ENCODE measurements at regions of chr2 and their contacts with region 1.

Region 1: GRCh38 chr2:70994756-70995729 is at the start of gene TEX261:
- DNase-seq: peak; percentile 98
- H3K4me3 Mint-ChIP-seq: peak within 1 kb of the TSS; percentile 99
- H3K27ac Mint-ChIP-seq: peak within 1 kb of the TSS; percentile 96
- H3K4me1 Mint-ChIP-seq: peaks cover 34% of the 10 kb centered on the region
- H3K27me3 Mint-ChIP-seq: no peaks in the 10 kb centered on the region
- total RNA-seq, gene TEX261: 81.7 and 88.8 TPM in 2 replicates

Region 2: GRCh38 chr2:70887550-70888246 is 107.3 kb before region 1 on chr2:
- intact Hi-C with region 1: no loop called
- DNase-seq: peak; percentile 77
- H3K4me3 Mint-ChIP-seq: peak overlapping the region; percentile 83
- H3K27ac Mint-ChIP-seq: peak overlapping the region; percentile 34
- H3K4me1 Mint-ChIP-seq: peaks cover 23% of the 10 kb centered on the region
- H3K27me3 Mint-ChIP-seq: peaks cover 90% of the 10 kb centered on the region

Region 3: GRCh38 chr2:70964596-70965386 is 30.3 kb before region 1 on chr2:
- intact Hi-C with region 1: loop called (anchors 1 kb)
- DNase-seq: peak; percentile 95
- H3K4me3 Mint-ChIP-seq: peak overlapping the region; percentile 90
- H3K27ac Mint-ChIP-seq: no peak overlapping the region
- H3K4me1 Mint-ChIP-seq: peaks cover 7% of the 10 kb centered on the region
- H3K27me3 Mint-ChIP-seq: peaks cover 37% of the 10 kb centered on the region

Region 4: GRCh38 chr2:70977605-70978205 is 17.3 kb before region 1 on chr2:
- intact Hi-C with region 1: loop called (anchors 1 kb)
- DNase-seq: peak; percentile 73
- H3K4me3 Mint-ChIP-seq: peak overlapping the region; percentile 79
- H3K27ac Mint-ChIP-seq: peak overlapping the region; percentile 54
- H3K4me1 Mint-ChIP-seq: peaks cover 12% of the 10 kb centered on the region
- H3K27me3 Mint-ChIP-seq: peaks cover 21% of the 10 kb centered on the region

Region 5: DNA sequence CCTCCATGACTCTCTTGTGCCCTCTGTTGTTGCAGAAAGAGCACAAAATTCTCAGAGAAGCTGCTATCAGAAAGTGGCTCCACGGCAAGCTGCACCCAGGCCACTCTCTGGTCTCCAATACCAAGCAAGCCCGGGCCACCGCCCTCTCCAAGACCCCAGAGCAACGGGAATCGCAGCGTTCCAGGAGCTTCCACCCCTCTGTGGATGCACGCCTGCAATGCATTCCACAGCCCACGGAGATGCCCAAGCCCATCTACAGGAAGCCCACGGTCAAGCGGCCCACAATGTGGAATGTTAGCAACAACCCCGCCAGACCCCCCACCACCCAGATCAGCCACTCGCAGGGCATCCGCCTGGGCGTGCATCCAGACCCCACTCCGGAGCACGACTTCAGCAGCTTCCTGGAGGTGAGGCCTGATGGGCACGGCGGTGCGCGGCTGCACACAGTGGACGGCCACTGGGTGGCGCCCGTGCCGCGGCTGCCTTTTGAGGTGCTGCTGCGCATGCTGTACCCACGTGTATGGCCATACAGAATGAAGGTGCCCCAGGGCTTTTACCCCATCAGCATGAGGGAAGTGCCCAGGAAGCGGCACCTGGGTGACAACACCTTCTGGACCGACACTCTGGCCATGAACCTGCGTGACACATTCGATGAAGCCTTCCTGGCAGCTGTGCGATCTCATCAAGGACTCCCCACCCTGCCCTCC is 10.3 kb before region 1 on chr2:
- intact Hi-C with region 1: loop called (anchors 1 kb)
- DNase-seq: peak; percentile 95
- H3K4me3 Mint-ChIP-seq: peak overlapping the region; percentile 45
- H3K27ac Mint-ChIP-seq: no peak overlapping the region
- H3K4me1 Mint-ChIP-seq: peaks cover 12% of the 10 kb centered on the region
- H3K27me3 Mint-ChIP-seq: no peaks in the 10 kb centered on the region

Region 6: DNA sequence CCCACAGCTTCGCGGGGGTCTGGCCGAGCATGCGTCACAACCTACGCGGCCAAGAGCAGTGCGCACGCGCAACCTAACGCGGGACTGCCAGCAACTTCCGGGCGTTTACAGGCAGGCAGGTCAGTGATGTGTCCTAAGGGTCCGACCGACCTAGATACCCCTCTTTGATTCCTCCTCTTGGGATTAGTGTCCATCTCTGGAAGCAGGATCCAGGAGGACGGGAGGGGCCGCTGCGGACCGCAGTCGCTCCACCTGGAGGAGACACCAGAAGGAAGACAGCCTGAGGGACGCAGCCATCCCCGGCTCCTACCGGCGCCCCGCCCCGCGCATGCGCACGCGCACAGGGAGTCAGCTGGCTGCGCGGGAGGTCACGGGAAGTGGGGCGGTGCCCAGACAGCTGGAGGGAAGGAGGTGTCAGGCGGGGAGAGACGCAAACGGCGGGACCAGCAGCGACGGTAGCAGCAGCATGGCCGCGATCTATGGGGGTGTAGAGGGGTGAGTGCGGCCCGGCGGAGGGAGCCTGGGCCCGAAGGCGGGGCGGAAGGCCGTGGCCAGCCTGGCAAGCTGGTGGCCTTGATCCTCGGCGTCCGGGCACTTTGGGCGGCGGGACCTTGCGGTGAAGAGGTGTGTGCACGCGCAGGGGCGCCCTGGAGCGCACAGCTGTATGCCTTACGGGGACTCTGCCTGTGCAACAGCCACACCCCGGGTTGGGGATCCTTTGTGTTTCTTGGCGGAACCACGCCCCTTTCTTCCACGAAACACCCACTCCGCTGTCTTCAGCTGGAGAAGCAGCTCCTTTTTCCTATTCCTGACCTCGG is 73.4 kb after region 1 on chr2 and contains the start of gene NAGK:
- intact Hi-C with region 1: loop called (anchors 2 kb)
- DNase-seq: peak; percentile 99
- H3K4me3 Mint-ChIP-seq: peak within 1 kb of the TSS; percentile 92
- H3K27ac Mint-ChIP-seq: peak within 1 kb of the TSS; percentile 96
- H3K4me1 Mint-ChIP-seq: peaks cover 51% of the 10 kb centered on the region
- H3K27me3 Mint-ChIP-seq: no peaks in the 10 kb centered on the region
- total RNA-seq, gene NAGK: 55.9 and 67.1 TPM in 2 replicates

Region 7: DNA sequence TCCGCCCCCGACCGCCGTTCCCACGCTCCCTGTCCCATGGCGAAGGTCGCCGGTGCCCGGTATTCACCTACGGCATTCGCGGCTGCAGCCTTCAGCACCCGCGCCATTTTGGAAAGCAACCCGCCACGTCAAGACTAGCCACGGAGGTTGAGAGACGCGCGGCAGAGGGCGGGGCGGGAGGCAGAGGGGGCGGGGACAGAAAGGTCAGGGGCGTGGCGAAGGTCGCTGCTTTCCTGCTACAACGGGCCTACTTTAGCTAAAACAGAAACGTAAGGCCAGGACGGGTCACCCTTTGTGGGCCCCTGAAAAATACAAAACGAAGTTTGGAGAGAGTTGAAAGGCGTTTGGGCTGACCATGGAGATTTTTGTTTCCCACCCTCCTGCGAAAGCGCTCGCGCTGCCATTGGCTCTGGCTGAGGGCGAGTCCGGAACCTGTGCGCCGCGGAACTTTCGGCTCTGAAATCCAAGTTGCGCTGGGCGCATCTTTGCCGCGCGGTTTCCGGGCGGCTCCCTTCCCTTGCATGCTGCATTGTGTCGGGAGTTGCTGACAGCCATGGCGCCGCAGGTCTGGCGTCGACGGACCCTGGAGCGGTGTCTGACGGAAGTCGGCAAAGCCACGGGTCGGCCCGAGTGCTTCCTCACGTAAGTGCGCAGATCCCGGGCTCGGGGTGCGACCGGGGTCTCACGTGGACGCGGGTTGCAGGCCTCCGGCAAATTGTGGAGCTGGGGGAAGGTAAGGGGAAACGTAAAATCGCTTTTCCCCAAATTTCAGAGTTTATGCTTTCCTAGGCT is 135.3 kb after region 1 on chr2 and contains the starts of genes MCEE and MPHOSPH10:
- intact Hi-C with region 1: loop called (anchors 1 kb)
- DNase-seq: peak; percentile 97
- H3K4me3 Mint-ChIP-seq: no peak within 1 kb of the TSS
- H3K27ac Mint-ChIP-seq: no peak within 1 kb of the TSS
- H3K4me1 Mint-ChIP-seq: peaks cover 8% of the 10 kb centered on the region
- H3K27me3 Mint-ChIP-seq: no peaks in the 10 kb centered on the region
- total RNA-seq, gene MCEE: 14.4 and 17.2 TPM in 2 replicates
- total RNA-seq, gene MPHOSPH10: 69.4 and 74.5 TPM in 2 replicates

Region 8: GRCh38 chr2:71226965-71227560 is 232.0 kb after region 1 on chr2 and contains the start of gene PAIP2B:
- intact Hi-C with region 1: loop called (anchors 10 kb)
- DNase-seq: peak; percentile 99
- H3K4me3 Mint-ChIP-seq: peak within 1 kb of the TSS; percentile 95
- H3K27ac Mint-ChIP-seq: peak within 1 kb of the TSS; percentile 81
- H3K4me1 Mint-ChIP-seq: peaks cover 8% of the 10 kb centered on the region
- H3K27me3 Mint-ChIP-seq: peaks cover 24% of the 10 kb centered on the region
- total RNA-seq, gene PAIP2B: 0.63 and 0.64 TPM in 2 replicates

Measured in activated CD4-positive, alpha-beta T cell treated with anti-CD3 and anti-CD28 coated beads, Interleukin-2, amount 10 ng/mL, durations not matched to agents 24 days and 14 days (primary cell).